ENCODE measurements at regions of chr9 and their contacts with region 1.

Region 1: GRCh38 chr9:77433675-77434445 is 214.3 kb downstream of the GNA14 start:
- DNase-seq: peak; percentile 61
- H3K4me3 Mint-ChIP-seq: no peak overlapping the region
- H3K27ac Mint-ChIP-seq: no peak overlapping the region
- H3K4me1 Mint-ChIP-seq: peaks cover 4% of the 10 kb centered on the region
- H3K27me3 Mint-ChIP-seq: no peaks in the 10 kb centered on the region
- CTCF ChIP-seq: peak; percentile 98

Region 2: GRCh38 chr9:77163884-77164283 is 270.0 kb before region 1 on chr9:
- CTCF ChIA-PET with region 1: interaction called, 10 read pairs
- POLR2A ChIA-PET with region 1: no interaction called
- intact Hi-C with region 1: loop called (anchors 5 kb)
- DNase-seq: peak; percentile 81
- H3K4me3 Mint-ChIP-seq: peak overlapping the region; percentile 46
- H3K27ac Mint-ChIP-seq: peak overlapping the region; percentile 84
- H3K4me1 Mint-ChIP-seq: peaks cover 39% of the 10 kb centered on the region
- H3K27me3 Mint-ChIP-seq: no peaks in the 10 kb centered on the region
- CTCF ChIP-seq: no peak

Region 3: DNA sequence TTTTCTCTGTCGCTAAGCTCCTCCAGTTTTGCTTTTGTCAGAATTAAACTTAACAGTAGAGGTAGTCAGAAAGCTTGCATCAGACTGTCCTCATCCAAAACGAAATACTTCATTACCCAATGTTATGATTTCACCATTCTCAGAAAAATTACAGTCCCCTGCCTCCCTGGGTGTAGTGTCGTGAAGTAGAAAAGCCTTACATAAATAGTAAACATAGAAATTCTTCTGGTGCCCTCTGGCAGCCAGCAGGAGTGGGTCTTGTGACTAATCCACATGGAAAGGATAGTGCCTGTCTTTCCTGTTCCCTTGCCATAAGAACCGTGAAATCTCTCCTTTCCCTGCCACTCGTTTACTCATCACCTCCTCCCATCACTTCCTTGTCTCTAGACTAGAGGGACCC is 16.3 kb before region 1 on chr9:
- CTCF ChIA-PET with region 1: interaction called, 29 read pairs
- POLR2A ChIA-PET with region 1: no interaction called
- intact Hi-C with region 1: no loop called
- DNase-seq: peak; percentile 84
- H3K4me3 Mint-ChIP-seq: no peak overlapping the region
- H3K27ac Mint-ChIP-seq: peak overlapping the region; percentile 91
- H3K4me1 Mint-ChIP-seq: peaks cover 21% of the 10 kb centered on the region
- H3K27me3 Mint-ChIP-seq: no peaks in the 10 kb centered on the region
- CTCF ChIP-seq: no peak

Region 4: DNA sequence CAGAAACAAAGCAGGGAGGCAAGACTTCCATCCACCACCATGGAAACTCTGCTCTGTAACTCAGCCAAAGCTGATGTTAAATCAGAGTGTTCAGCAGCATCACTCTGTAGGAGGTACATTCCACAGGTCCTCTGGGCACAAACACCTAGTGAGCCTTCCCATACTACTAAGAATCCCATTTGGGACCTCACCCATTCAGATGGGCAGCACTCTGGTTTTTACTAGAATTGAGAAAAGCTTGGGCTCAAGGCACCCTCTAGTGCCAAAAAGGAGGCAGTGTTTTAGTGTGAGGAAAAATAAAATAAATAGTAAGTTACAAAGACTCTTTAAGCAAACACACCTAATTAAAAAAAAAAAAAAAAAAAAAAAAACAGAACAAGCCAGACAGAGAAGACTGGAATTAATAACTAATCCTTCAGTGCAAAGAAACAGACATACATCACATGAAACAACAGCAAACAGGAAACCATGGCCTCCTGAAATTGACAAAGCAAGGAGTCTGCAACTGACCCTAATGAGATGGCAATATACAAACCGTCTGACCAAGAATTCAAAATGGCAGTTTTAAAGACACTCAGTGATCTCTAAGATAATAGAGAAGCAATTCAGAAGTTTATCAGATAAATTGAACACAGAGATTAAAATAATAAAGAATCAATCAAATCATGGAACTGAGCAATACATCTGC is 54.7 kb after region 1 on chr9:
- CTCF ChIA-PET with region 1: interaction called, 34 read pairs
- POLR2A ChIA-PET with region 1: no interaction called
- intact Hi-C with region 1: loop called (anchors 1 kb)
- DNase-seq: peak; percentile 41
- H3K4me3 Mint-ChIP-seq: no peak overlapping the region
- H3K27ac Mint-ChIP-seq: no peak overlapping the region
- H3K4me1 Mint-ChIP-seq: no peaks in the 10 kb centered on the region
- H3K27me3 Mint-ChIP-seq: no peaks in the 10 kb centered on the region
- CTCF ChIP-seq: peak; percentile 41

Region 5: DNA sequence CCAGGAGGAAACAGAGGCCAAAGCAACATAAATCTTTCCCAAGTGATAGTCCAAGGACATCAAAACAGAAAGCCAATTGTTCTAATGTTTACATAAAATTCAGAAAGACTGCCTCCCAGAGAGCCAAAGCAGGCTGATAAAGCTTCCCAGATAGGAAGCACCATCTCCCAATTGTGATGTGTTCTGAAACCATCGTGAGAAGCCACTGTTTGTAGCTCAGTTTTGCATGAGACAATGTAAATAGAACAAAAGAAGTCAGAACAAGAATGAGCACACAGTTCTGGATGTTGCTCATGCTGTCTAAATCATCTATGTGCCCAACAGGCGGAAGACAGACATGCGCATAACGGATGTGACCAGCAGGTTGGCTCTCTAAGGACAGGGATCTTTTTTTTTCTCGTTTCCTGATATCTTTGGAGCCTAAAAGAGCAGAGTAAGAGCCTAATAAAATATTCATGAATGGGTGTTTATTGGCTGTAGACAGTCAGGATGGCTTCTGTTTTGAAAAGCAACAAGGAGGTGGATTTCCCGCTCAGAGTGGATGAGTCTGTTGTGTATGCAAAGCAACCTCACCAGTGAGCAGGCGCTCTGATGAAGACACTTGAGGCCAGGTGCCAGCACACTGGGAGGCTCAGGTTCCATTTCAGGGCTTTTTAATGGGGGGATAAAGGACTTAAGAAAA is 100.7 kb after region 1 on chr9:
- CTCF ChIA-PET with region 1: no interaction called
- POLR2A ChIA-PET with region 1: no interaction called
- intact Hi-C with region 1: no loop called
- DNase-seq: no peak
- H3K4me3 Mint-ChIP-seq: no peak overlapping the region
- H3K27ac Mint-ChIP-seq: no peak overlapping the region
- H3K4me1 Mint-ChIP-seq: no peaks in the 10 kb centered on the region
- H3K27me3 Mint-ChIP-seq: peaks cover 40% of the 10 kb centered on the region
- CTCF ChIP-seq: no peak

Region 6: DNA sequence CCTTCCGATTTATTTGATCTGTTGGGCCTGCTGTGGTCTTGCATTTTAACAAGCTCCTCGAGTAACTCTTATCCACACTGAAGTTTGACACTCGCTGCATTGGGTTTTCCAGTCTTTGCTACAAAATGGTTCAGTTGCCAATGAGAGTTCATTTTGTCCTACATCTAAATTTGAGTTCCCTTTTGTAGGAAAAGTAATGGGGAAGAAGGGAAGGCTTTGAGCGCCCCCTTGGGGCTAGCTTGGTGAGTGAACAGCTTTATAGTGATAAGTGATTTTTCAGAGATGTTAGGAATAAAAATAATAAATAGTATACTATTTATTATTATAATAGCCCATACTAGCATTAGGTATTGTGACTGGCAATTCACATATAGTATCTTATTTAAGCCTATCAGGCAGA is 687.6 kb after region 1 on chr9:
- CTCF ChIA-PET with region 1: interaction called, 11 read pairs
- POLR2A ChIA-PET with region 1: no interaction called
- intact Hi-C with region 1: loop called (anchors 1 kb)
- DNase-seq: peak; percentile 80
- H3K4me3 Mint-ChIP-seq: no peak overlapping the region
- H3K27ac Mint-ChIP-seq: no peak overlapping the region
- H3K4me1 Mint-ChIP-seq: peaks cover 30% of the 10 kb centered on the region
- H3K27me3 Mint-ChIP-seq: no peaks in the 10 kb centered on the region
- CTCF ChIP-seq: peak; percentile 66